ENCODE measurements at regions of chr7 and their contacts with region 1.

Region 1: DNA sequence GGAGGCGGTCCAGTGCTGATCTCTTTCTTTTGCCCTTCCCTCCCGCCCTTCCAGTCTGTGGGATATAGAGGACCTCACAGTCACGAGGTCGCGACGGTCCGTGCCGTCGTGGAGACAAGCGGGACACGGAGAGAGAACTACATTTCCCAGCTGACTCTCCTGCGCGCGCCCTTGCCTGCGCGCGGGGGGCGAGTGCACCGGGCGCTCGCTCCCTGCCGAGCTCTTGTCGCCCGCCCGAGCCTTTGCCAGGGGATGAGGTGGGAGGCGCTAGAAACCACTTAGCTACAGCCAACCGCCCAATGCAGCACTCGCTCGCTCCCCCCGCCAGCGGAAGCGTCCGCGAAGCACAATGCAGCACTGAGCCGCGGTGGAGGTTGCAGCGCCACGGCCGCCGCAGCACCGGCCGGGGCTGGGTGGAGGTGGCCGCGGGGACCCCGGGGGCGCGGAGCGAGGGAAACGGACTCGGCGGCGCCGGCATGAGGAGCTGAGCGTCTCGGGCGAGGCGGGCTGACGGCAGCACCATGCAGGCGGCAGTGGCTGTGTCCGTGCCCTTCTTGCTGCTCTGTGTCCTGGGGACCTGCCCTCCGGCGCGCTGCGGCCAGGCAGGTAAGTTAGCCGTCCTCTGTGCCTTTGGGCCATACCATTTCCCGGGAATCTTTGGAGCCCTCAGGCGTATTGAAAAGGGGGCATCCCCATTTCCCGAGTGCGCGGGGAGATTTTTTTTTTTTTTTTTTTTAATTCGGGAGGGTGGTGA is at the start of gene ADAM22:
- DNase-seq: peak; percentile 95
- ATAC-seq: peak; percentile 95
- H3K4me3 Mint-ChIP-seq: peak within 1 kb of the TSS; percentile 83
- H3K27ac Mint-ChIP-seq: peak within 1 kb of the TSS; percentile 74
- H3K4me1 Mint-ChIP-seq: peaks cover 14% of the 10 kb centered on the region
- H3K27me3 Mint-ChIP-seq: peaks cover 9% of the 10 kb centered on the region
- total RNA-seq, gene ADAM22: 5.2 to 5.8 TPM

Region 2: GRCh38 chr7:87886875-87887274 is 47.2 kb before region 1 on chr7:
- CTCF ChIA-PET with region 1: no interaction called
- DNase-seq: no peak
- ATAC-seq: no peak
- H3K4me3 Mint-ChIP-seq: no peak overlapping the region
- H3K27ac Mint-ChIP-seq: no peak overlapping the region
- H3K4me1 Mint-ChIP-seq: peaks cover 11% of the 10 kb centered on the region
- H3K27me3 Mint-ChIP-seq: no peaks in the 10 kb centered on the region

Region 3: GRCh38 chr7:87944531-87944930 is 10.4 kb after region 1 on chr7:
- CTCF ChIA-PET with region 1: interaction called, 10 read pairs
- DNase-seq: no peak
- ATAC-seq: no peak
- H3K4me3 Mint-ChIP-seq: no peak overlapping the region
- H3K27ac Mint-ChIP-seq: no peak overlapping the region
- H3K4me1 Mint-ChIP-seq: no peaks in the 10 kb centered on the region
- H3K27me3 Mint-ChIP-seq: no peaks in the 10 kb centered on the region

Region 4: DNA sequence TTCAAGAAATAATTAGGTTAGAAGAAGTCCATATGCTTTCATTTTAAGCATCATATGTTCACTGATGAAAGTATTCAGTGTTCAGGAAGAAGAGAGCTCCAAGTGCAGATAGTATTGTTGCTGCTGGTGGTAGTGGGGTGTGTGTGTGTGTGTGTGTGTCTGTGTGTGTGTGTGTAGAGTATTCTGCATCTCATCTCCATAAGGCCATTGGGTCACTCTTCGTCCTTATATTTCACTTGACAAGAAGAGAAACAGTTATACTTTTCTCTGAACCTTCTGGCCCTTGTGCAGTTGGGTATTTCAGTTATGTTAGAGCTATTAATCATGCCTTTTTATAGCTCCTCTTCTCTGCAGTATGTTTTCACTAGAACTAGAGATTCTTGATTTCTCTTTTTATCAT is 26.1 kb after region 1 on chr7:
- CTCF ChIA-PET with region 1: no interaction called
- DNase-seq: no peak
- ATAC-seq: no peak
- H3K4me3 Mint-ChIP-seq: no peak overlapping the region
- H3K27ac Mint-ChIP-seq: no peak overlapping the region
- H3K4me1 Mint-ChIP-seq: no peaks in the 10 kb centered on the region
- H3K27me3 Mint-ChIP-seq: no peaks in the 10 kb centered on the region